ENCODE measurements at regions of chr1 and their contacts with region 1.

Region 1: GRCh38 chr1:24642481-24643361 is at the start of gene SRRM1:
- DNase-seq: peak; percentile 99 to 100
- ATAC-seq: peak; percentile 93 to 97 (median 96)
- H3K4me3 ChIP-seq: peak within 1 kb of the TSS; percentile 86
- H3K27ac ChIP-seq: peak within 1 kb of the TSS; percentile 99
- H3K4me1 ChIP-seq: peaks cover 20% of the 10 kb centered on the region
- H3K27me3 ChIP-seq: no peaks in the 10 kb centered on the region
- CTCF ChIP-seq: no peak
- total RNA-seq, gene SRRM1: 63.0 to 78.4 (median 69.2) TPM

Region 2: DNA sequence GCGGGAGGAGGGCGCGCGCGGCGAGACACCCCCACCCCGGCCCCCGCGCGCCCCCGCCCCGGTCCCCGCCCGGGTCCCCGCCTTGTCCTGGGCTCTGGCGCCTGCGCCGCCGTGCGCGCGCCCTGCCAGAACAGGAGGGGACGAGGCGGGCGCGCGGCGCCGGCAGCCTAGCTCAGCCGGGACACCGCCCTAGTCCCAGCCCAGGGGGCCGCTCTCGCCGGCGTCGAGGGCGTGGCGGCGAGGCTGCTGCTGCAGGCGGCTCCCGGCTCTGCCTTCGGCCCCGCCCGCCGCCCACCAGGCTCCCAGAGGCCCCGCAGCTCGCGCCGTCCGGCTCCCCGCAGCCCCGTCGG is 140.0 kb before region 1 on chr1 and contains the start of gene RCAN3:
- intact Hi-C with region 1: no loop called
- DNase-seq: peak; percentile 81 to 88
- ATAC-seq: peak; percentile 61 to 93 (median 84)
- H3K4me3 ChIP-seq: peak within 1 kb of the TSS; percentile 61
- H3K27ac ChIP-seq: peak within 1 kb of the TSS; percentile 32
- H3K4me1 ChIP-seq: no peaks in the 10 kb centered on the region
- H3K27me3 ChIP-seq: peaks cover 0 to 56% (median 18%) of the 10 kb centered on the region in 3 donors
- CTCF ChIP-seq: no peak
- total RNA-seq, gene RCAN3: 0.96 to 3.0 (median 1.8) TPM

Region 3: DNA sequence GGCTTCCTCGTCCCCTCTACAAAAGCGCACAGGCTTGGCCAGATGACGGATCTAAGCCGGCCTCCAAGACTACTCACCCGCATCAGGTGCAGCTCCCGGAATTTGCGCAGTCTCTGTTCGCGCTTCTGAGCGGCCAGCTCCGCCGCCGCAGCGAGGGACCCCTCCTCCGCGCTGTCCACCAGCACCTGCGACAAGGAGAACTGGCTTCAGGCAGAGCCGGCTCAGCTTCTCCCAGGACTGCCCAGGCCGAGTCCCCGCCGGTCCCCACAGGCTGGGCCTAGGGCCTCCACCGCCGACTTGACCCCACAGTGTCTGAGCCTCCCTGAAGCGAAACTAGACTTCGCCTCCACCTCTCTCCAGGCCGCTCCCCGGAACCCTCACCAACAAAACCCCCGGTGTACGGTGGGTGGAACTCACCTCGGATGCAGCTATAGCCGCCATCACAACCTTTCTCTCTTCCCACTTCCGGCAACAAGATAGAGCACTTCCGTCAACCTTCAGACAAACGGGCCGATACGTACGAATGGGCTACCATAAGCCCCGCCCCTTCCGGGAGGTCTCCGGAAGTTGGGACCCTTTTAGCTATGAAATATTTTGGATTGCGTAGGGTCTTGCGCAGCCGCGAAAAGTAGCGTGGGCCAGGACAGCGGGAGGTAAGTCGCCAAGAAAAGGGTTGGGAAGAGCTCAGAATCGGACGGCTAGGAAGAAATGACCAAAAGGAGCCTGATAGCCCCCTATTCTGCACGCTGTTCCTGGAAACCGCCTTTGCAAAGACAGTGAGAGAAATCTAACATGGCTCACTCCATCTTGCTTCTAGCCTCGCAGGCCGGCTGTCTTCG is 589.5 kb after region 1 on chr1 and contains the start of gene SYF2:
- intact Hi-C with region 1: loop called in 1 of 2 experiments (anchors 5 kb)
- DNase-seq: peak; percentile 95 to 96
- ATAC-seq: peak; percentile 85 to 90 (median 88)
- H3K4me3 ChIP-seq: peak within 1 kb of the TSS; percentile 90
- H3K27ac ChIP-seq: peak within 1 kb of the TSS; percentile 95
- H3K4me1 ChIP-seq: peaks cover 39% of the 10 kb centered on the region
- H3K27me3 ChIP-seq: no peaks in the 10 kb centered on the region
- CTCF ChIP-seq: no peak
- total RNA-seq, gene SYF2: 23.9 to 44.5 (median 30.0) TPM